WTC11 (cell line): ENCODE measurements at regions of chr1 and their contacts with region 1.

Region 1: DNA sequence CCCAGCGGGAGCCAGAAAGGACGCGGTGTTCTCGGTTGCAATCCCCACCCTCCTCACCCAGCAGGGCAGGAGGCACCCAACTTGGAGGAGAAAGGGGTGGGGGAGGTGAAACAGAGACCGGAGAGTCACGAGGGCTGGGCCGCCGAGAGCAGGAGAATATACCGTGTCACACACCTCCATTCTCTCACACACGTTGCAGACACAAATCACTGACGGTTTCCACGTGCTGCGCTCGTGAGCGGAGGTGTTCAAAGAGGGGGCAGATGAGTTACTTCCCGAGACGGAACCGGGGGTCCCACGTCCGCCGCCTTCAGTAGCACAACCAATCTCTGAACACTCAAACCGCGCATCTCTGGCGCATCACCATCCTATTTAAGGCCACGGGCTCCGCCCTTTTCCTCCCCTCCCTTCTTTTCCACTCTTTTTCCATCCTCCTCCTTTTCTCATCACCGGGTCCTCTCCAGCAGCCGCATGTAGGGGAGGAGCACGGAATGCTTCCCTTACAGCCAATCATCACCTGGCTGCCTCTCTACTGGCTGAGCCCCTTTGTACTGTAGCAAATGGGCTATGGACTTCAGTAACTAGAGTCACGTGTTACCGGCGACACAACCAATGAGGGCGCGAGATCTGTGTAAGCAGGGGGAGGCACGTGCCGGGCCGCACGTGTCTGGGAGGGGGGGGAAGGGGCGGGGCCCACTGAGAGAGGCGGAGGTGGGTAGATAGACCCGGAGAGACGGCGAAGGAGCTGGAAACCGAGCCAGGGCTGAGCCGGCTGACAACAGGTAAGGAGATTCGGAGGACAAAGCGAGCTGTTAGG is at the start of gene CIART:
- DNase-seq: peak; percentile 92
- ATAC-seq: peak; percentile 95
- H3K4me3 Mint-ChIP-seq: peak within 1 kb of the TSS; percentile 91
- H3K27ac Mint-ChIP-seq: peak within 1 kb of the TSS; percentile 99
- H3K4me1 Mint-ChIP-seq: peaks cover 22% of the 10 kb centered on the region
- H3K27me3 Mint-ChIP-seq: peaks cover 36% of the 10 kb centered on the region
- CTCF ChIP-seq: no peak
- total RNA-seq, gene CIART: 7.8 to 10.5 TPM (median 8.1 TPM) in 3 replicates

Region 2: GRCh38 chr1:150089846-150090520 is 192.1 kb before region 1 on chr1:
- CTCF ChIA-PET with region 1: no interaction called
- POLR2A ChIA-PET with region 1: no interaction called
- DNase-seq: no peak
- ATAC-seq: no peak
- H3K4me3 Mint-ChIP-seq: no peak overlapping the region
- H3K27ac Mint-ChIP-seq: no peak overlapping the region
- H3K4me1 Mint-ChIP-seq: no peaks in the 10 kb centered on the region
- H3K27me3 Mint-ChIP-seq: no peaks in the 10 kb centered on the region
- CTCF ChIP-seq: no peak

Region 3: GRCh38 chr1:150259758-150260669 is 22.0 kb before region 1 on chr1:
- CTCF ChIA-PET with region 1: interaction called, 123 read pairs
- POLR2A ChIA-PET with region 1: interaction called, 23 read pairs
- DNase-seq: peak; percentile 79
- ATAC-seq: peak; percentile 83
- H3K4me3 Mint-ChIP-seq: peak overlapping the region; percentile 83
- H3K27ac Mint-ChIP-seq: peak overlapping the region; percentile 95
- H3K4me1 Mint-ChIP-seq: peaks cover 44% of the 10 kb centered on the region
- H3K27me3 Mint-ChIP-seq: no peaks in the 10 kb centered on the region
- CTCF ChIP-seq: no peak

Region 4: DNA sequence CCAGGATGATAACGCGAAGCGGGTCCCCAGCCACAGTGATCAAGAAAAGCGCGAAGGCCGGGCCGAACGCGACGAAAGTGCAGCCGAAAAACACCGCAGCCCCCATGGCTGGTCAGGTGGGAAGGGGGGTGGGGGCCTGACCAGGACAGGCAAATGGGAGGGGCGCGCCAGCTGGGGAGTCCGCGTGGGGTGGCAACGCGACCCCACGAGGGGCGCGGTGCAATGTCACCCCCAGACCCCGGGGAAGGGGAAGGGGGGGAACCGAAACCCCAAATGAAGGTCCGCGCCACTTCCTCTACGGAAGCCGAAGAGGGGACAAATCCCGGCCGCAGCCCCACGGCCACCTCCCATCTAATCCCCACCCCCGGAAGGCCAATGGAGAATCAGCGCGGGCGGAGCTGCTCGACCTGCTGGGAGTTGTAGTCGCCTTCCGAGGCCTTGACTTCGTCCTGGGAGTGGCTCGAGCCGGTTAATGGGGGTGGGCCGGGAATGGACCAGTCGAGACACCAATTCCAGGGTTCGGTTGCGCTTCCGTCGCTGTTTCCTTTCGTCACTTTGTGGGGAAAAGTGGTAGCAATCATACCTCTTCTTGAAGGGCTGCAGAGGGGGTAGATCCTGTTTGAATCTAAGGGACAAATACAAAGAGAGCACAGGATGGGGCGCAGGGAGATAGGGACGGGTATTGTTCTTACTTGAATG is 13.2 kb before region 1 on chr1 and contains the start of gene APH1A:
- CTCF ChIA-PET with region 1: interaction called, 45 read pairs
- POLR2A ChIA-PET with region 1: interaction called, 21 read pairs
- DNase-seq: peak; percentile 98
- ATAC-seq: peak; percentile 95
- H3K4me3 Mint-ChIP-seq: peak within 1 kb of the TSS; percentile 100
- H3K27ac Mint-ChIP-seq: peak within 1 kb of the TSS; percentile 100
- H3K4me1 Mint-ChIP-seq: peaks cover 49% of the 10 kb centered on the region
- H3K27me3 Mint-ChIP-seq: no peaks in the 10 kb centered on the region
- CTCF ChIP-seq: no peak
- total RNA-seq, gene APH1A: 110 to 120 TPM (median 113 TPM) in 3 replicates

Region 5: DNA sequence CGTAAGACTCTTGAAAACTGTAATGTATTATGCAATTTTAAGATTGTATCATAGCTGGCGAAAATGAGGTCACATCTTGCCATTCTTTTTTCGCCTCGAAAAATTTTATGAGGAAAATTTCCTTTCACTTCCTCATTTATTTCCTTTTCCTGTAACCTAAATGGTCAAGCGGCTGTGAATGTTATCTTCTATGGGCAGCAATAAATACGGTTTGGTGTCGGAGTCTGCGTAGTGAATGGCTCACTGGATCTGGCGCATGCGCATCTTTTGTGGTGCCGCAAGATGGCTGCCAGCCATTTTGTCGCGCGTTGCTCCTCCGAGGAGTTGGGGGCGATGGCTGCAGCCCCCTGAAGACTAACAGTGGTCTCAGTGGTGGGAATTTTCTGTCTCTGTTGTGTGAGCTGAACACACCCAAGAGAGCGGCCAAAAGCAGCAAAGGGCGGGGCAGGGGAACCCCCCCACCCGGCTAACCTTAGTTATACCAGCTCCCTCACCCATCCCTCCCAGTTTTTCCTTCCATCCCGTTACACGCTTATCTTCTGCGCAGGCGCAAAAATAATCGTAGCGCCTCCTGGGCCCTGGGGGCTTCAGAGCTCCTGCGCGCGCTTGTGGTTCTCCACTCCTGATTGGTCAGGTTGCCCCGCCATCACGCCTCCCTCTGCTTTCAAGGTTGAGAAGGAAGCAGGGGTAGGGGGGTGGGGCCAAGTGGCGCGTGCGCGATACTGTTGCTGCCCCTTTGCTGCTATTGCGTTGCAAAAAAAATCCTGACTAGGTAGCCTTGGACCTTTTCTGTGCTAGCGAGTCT is 81.6 kb after region 1 on chr1 and contains the start of gene RPRD2:
- CTCF ChIA-PET with region 1: interaction called, 3 read pairs
- POLR2A ChIA-PET with region 1: interaction called, 12 read pairs
- DNase-seq: peak; percentile 99
- ATAC-seq: peak; percentile 97
- H3K4me3 Mint-ChIP-seq: peak within 1 kb of the TSS; percentile 99
- H3K27ac Mint-ChIP-seq: peak within 1 kb of the TSS; percentile 99
- H3K4me1 Mint-ChIP-seq: peaks cover 27% of the 10 kb centered on the region
- H3K27me3 Mint-ChIP-seq: peaks cover 4% of the 10 kb centered on the region; the same call in 1 of the 2 replicates
- CTCF ChIP-seq: no peak
- total RNA-seq, gene RPRD2: 25.4 to 26.4 TPM (median 26.1 TPM) in 3 replicates